ENCODE measurements at regions of chr16 and their contacts with region 1.

Region 1: GRCh38 chr16:61721544-61721943 is 314.7 kb downstream of the CDH8 start:
- DNase-seq: no peak
- H3K4me3 ChIP-seq: no peak overlapping the region
- H3K4me3 Mint-ChIP-seq: no peak overlapping the region
- H3K27ac Mint-ChIP-seq: no peak overlapping the region
- H3K4me1 ChIP-seq: no peaks in the 10 kb centered on the region
- H3K4me1 Mint-ChIP-seq: no peaks in the 10 kb centered on the region
- H3K27me3 ChIP-seq: no peaks in the 10 kb centered on the region
- H3K27me3 Mint-ChIP-seq: peaks cover 5% of the 10 kb centered on the region
- CTCF ChIP-seq: no peak

Region 2: GRCh38 chr16:61654962-61655361 is 66.6 kb before region 1 on chr16:
- CTCF ChIA-PET with region 1: no interaction called
- POLR2A ChIA-PET with region 1: no interaction called
- intact Hi-C with region 1: loop called (anchors 10 kb)
- DNase-seq: no peak
- H3K4me3 ChIP-seq: no peak overlapping the region
- H3K4me3 Mint-ChIP-seq: no peak overlapping the region
- H3K27ac Mint-ChIP-seq: no peak overlapping the region
- H3K4me1 ChIP-seq: no peaks in the 10 kb centered on the region
- H3K4me1 Mint-ChIP-seq: no peaks in the 10 kb centered on the region
- H3K27me3 ChIP-seq: no peaks in the 10 kb centered on the region
- H3K27me3 Mint-ChIP-seq: no peaks in the 10 kb centered on the region
- CTCF ChIP-seq: no peak

Measured in Caco-2 (cell line).